AG04450 (cell line): ENCODE measurements at regions of chr10 and their contacts with region 1.

Region 1: GRCh38 chr10:63166742-63167258 is 33.7 kb downstream of the NRBF2 start:
- DNase-seq: peak; percentile 65
- H3K4me3 ChIP-seq: no peak overlapping the region
- H3K27ac ChIP-seq: no peak overlapping the region
- H3K27me3 ChIP-seq: no peaks in the 10 kb centered on the region
- CTCF ChIP-seq: peak; percentile 92

Region 2: GRCh38 chr10:63145782-63146181 is 21.0 kb before region 1 on chr10:
- CTCF ChIA-PET with region 1: interaction called, 10 read pairs
- POLR2A ChIA-PET with region 1: no interaction called
- DNase-seq: no peak
- H3K4me3 ChIP-seq: no peak overlapping the region
- H3K27ac ChIP-seq: no peak overlapping the region
- H3K27me3 ChIP-seq: no peaks in the 10 kb centered on the region
- CTCF ChIP-seq: no peak

Region 3: DNA sequence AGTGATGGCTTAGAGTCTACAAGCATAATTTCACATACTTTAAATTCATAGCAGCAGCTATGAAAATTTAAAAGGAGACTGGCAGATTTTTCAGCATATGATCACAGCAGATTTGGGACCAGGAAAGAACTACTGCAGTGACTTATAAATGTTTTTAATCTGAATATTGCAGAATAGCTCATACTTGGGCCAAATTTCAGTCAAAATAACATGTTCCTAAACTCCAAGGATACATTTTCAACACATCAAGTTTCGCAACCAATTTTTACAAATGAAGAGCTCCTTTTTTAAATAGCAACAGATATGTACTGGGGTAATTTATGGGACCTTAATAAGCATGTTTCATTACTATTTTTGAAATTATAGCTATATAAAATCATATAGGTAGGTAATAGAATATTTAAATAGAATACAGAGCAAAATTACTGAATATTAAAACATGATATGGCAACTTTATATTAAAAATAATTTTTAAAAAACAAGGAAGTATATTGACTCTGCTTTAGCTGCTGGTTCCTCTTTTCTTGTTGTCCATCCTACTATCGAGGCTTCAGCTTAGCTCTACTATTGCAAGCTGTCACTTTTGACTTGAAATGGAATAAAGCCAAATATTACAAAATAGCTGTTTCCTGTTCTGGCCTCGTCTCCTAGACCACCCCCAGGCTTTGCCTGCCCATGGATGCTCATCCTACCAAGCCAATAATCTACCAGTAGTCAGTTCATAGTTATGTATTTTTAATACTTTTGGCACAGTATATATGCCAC is 89.4 kb after region 1 on chr10:
- CTCF ChIA-PET with region 1: interaction called, 10 read pairs
- POLR2A ChIA-PET with region 1: no interaction called
- DNase-seq: no peak
- H3K4me3 ChIP-seq: no peak overlapping the region
- H3K27ac ChIP-seq: no peak overlapping the region
- H3K27me3 ChIP-seq: no peaks in the 10 kb centered on the region
- CTCF ChIP-seq: no peak

Region 4: DNA sequence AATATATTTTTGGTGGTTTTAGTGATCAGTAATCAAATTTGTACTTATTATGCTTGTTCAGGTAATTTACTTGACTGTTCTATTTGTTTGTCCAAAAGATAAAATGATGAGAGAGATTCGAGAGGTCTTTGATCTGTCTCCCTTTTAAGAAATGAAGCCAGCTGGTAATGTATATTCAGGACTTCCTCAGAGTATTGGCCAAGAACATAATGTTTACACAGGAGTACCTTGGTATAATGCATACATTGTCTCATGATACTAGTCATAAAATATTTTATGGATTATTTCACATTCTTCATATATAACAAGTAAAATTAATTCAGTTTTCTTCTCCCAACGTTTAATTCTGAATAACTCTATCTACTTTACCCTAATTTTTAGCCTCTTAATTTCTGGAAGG is 455.3 kb after region 1 on chr10:
- CTCF ChIA-PET with region 1: interaction called, 171 read pairs
- POLR2A ChIA-PET with region 1: no interaction called
- DNase-seq: no peak
- H3K4me3 ChIP-seq: no peak overlapping the region
- H3K27ac ChIP-seq: no peak overlapping the region
- H3K27me3 ChIP-seq: no peaks in the 10 kb centered on the region
- CTCF ChIP-seq: no peak

Region 5: GRCh38 chr10:63700209-63700613 is 533.4 kb after region 1 on chr10:
- CTCF ChIA-PET with region 1: interaction called, 14 read pairs
- POLR2A ChIA-PET with region 1: no interaction called
- DNase-seq: peak; percentile 92
- H3K4me3 ChIP-seq: no peak overlapping the region
- H3K27ac ChIP-seq: peak overlapping the region; percentile 74
- H3K27me3 ChIP-seq: no peaks in the 10 kb centered on the region
- CTCF ChIP-seq: no peak

Region 6: GRCh38 chr10:63819753-63820329 is 653.0 kb after region 1 on chr10:
- CTCF ChIA-PET with region 1: interaction called, 40 read pairs
- POLR2A ChIA-PET with region 1: no interaction called
- DNase-seq: peak; percentile 18
- H3K4me3 ChIP-seq: no peak overlapping the region
- H3K27ac ChIP-seq: no peak overlapping the region
- H3K27me3 ChIP-seq: no peaks in the 10 kb centered on the region
- CTCF ChIP-seq: peak; percentile 92